Spleen (tissue), 13 donors: ENCODE measurements at regions of chr9 and their contacts with region 1.

Region 1: DNA sequence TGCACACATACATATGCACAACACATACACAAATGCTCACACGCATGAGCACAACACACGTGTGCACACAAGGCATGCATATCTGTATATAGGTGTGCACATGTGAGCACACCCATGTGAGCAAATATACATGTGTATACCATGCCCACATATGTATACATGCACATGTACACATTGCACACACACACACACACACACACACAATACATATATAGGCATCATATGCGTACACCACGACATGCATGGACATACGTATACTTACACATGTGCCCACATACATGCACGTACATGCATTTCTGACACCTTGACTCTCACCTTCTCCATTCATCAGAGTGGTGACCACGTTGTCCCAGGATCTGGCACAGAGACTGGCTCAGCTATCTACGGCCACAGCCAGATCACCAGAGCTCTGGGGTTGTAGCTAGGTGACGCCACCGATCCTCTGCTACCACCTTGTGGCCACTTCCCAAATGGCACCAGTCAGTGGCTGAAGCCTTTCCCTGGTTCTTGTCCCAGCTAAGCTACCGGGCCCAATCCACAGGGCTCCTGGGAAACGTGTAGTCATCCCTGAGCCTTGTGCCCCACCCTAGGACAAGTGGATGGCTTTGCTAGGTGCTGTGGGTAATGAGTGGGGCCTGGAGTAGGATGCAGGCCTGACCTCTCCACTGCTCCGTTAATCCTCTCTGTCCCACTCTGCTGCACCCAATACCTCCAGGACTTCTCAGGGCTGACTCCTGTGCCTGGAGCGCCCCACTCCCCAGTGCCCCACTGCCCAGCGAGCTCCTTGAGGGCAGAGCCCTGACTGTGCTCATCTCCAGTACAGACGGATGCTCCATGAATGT is 194.4 kb downstream of the RGS3 start:
- DNase-seq: peak; percentile 92
- H3K4me3 ChIP-seq: no peak overlapping the region
- H3K27ac ChIP-seq: no peak overlapping the region
- H3K4me1 ChIP-seq: peaks cover 10 to 47% (median 32%) of the 10 kb centered on the region in 6 donors
- H3K27me3 ChIP-seq: peaks cover 0 to 24% (median 0%) of the 10 kb centered on the region in 7 donors
- CTCF ChIP-seq: peak; percentile 92 to 97 (median 95)
- POLR2A ChIP-seq: no peak

Region 2: GRCh38 chr9:113564498-113565237 is 93.3 kb before region 1 on chr9:
- intact Hi-C with region 1: no loop called
- DNase-seq: peak; percentile 80
- H3K4me3 ChIP-seq: peak overlapping the region in 7 of 8 donors; percentile 7 to 58 (median 36)
- H3K27ac ChIP-seq: peak overlapping the region in 7 of 8 donors; percentile 74 to 89 (median 82)
- H3K4me1 ChIP-seq: peaks cover 0 to 95% (median 55%) of the 10 kb centered on the region in 6 donors
- H3K27me3 ChIP-seq: no peaks in the 10 kb centered on the region
- CTCF ChIP-seq: no peak
- POLR2A ChIP-seq: peak in 1 of 3 donors; percentile 16

Region 3: DNA sequence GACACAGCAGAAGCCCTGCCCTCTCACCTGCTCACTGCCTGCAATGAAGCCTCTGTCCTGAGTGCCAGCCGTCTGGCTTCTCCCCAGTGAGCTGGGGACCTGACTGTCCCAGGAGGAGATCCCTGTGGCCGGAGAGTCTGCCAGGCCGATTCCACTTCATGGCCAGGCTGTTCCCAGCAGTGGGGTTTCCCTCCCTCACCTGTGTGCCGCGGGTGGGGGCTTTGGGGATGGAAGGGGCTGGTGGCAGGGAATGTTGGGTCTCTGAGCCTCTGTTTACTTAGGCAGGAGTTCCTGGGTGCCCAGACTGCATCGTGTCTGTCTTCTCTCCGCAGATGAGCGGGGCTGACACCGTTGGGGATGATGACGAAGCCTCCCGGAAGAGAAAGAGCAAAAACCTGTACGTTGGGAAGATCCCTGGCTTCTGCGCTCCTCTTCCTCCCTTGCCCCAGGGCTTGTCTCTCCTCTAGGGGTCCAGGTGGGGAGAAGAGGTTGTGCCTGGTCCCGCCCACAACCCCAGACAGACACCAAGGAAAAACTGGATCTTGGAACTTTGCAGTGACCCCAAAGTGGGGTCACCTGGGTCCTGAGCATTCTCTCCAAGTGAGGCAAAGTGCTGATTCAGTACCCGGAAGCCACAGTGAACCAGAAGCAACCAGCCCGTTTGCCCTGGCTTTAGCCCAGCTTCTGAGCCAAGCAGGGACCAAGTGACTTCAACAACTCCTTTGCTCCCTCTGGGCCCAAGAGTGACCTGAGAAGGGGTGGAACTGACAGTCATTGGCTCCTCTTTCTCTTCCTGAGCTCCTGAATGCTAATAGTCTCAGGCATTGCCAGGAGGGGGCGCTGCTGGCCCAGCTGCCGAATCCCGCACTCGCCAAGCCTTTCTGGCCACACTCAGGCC is 66.7 kb before region 1 on chr9:
- intact Hi-C with region 1: loop called (anchors 2 kb)
- DNase-seq: peak; percentile 90
- H3K4me3 ChIP-seq: no peak overlapping the region
- H3K27ac ChIP-seq: peak overlapping the region in 5 of 8 donors; percentile 16 to 88 (median 81)
- H3K4me1 ChIP-seq: peaks cover 62 to 100% (median 88%) of the 10 kb centered on the region in 6 donors
- H3K27me3 ChIP-seq: no peaks in the 10 kb centered on the region
- CTCF ChIP-seq: peak; percentile 66 to 90 (median 83)
- POLR2A ChIP-seq: no peak